ENCODE measurements at regions of chr2 and their contacts with region 1.

Region 1: GRCh38 chr2:66813976-66814375 is 379.1 kb downstream of the MEIS1 start:
- DNase-seq: no peak

Region 2: GRCh38 chr2:65952951-65953350 is 861.0 kb before region 1 on chr2:
- intact Hi-C with region 1: loop called in 1 of 2 experiments (anchors 5 kb)
- DNase-seq: no peak

Region 3: DNA sequence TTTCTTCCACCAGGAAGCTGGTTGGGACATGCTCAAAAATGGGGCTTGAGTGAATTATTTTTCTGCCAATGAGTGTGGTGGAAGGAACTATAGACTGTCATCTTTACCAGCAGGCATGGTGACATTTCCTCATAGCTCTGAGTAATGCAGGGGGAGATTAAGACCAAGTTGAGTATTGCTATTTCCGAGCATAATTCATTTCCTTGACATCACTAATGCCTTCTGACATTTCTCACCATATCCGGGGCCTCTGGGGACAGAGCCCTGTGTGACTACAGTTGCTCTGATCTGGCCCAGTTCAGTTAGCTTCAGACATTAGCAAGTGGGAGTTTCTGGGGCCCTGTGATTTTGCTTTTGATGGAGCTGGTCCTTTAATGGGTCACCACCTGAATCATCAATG is 31.3 kb after region 1 on chr2:
- intact Hi-C with region 1: loop called in 1 of 2 experiments (anchors 5 kb)
- DNase-seq: no peak